ENCODE measurements at regions of chr17 and their contacts with region 1.

Region 1: DNA sequence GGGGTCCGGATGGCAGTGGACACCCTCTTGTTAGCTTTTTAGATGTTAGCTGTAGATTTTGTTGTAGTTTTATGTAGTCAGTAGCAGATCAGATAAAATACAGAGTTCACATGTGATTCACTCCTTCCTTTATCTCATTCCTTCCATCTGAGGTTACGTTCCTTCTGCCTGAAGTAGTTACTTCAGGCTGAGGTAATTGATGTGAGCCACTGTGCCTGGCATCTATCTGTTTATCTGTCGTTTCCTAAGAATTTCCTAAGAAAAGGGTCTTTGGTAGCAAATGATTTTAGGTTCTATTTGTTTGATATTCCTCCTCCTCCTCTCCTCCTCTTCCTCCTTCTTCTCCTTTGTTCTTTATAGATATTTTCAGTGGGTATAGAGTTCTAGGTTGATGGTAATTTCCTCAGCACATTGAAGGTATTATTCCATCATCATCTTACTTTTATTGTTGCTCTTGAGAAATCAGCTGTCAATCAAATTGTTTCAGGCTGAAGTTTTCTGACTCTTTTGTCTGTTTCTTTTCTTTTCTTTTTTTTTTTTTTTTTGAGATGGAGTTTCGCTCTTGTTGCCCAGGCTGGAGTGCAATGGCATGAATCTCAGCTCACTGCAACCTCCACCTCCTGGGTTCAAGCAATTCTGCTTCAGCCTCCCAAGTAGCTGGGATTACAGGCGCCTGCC is 29.6 kb upstream of the FBXO47 start:
- DNase-seq: no peak
- H3K4me3 ChIP-seq: no peak overlapping the region
- H3K4me3 Mint-ChIP-seq: no peak overlapping the region
- H3K27ac ChIP-seq: no peak overlapping the region
- H3K27ac Mint-ChIP-seq: no peak overlapping the region
- H3K4me1 ChIP-seq: peaks cover 7 to 10% of the 10 kb centered on the region in 2 donors
- H3K4me1 Mint-ChIP-seq: peaks cover 17% of the 10 kb centered on the region
- H3K27me3 ChIP-seq: no peaks in the 10 kb centered on the region
- H3K27me3 Mint-ChIP-seq: peaks cover 0 to 2% (median 2%) of the 10 kb centered on the region in 3 donors
- CTCF ChIP-seq: no peak

Region 2: GRCh38 chr17:39045948-39046679 is 49.3 kb after region 1 on chr17:
- intact Hi-C with region 1: loop called in 1 of 2 experiments (anchors 5 kb)
- DNase-seq: no peak
- H3K4me3 ChIP-seq: no peak overlapping the region
- H3K4me3 Mint-ChIP-seq: no peak overlapping the region
- H3K27ac ChIP-seq: no peak overlapping the region
- H3K27ac Mint-ChIP-seq: no peak overlapping the region
- H3K4me1 ChIP-seq: no peaks in the 10 kb centered on the region
- H3K4me1 Mint-ChIP-seq: no peaks in the 10 kb centered on the region
- H3K27me3 ChIP-seq: peaks cover under 1 to 4% of the 10 kb centered on the region in 2 donors
- H3K27me3 Mint-ChIP-seq: peaks cover under 1 to 11% (median 8%) of the 10 kb centered on the region in 3 donors
- CTCF ChIP-seq: no peak

Measured in CD14-positive monocyte (primary cell).